Astrocyte of the spinal cord (primary cell): ENCODE measurements at regions of chr3 and their contacts with region 1.

Region 1: GRCh38 chr3:187739561-187740332 is 5.5 kb downstream of the BCL6 start:
- DNase-seq: peak; percentile 97
- H3K4me3 ChIP-seq: peak overlapping the region; percentile 99
- CTCF ChIP-seq: peak; percentile 93

Region 2: DNA sequence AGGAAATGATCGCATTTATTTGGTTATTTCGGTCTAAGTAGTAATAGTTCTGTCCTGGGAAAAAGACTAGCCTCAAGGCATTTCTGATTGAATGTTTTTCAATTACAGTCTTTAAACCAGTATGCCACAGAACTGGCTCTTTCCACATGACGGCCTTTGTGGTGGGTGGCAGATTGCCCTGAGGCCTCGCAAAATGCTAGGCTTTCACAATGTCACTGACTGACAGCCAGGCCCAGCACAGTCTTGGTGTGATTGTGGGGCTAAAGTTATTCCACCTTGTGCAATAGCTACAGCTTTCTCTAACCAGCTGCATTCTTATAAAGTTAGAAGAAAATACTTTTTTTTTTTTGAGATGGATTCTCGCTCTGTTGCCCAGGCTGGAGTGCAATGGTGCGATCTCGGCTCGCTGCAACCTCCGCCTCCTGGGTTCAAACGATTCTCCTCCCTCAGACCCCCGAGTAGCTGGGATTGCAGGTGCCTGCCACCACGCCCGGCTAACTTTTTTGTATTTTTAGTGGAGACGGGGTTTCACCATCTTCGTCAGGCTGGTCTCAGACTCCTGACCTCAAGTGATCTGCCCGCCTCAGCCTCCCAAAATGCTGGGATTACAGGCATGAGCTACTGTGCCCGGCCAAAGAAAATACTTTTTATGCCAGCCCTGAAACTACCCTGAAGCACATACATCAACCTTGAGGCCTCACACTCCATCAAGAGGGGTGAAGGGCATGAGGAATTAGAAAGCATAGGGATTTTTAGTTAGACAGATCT is 899.7 kb before region 1 on chr3:
- in situ Hi-C with region 1: no loop called
- DNase-seq: peak; percentile 40
- H3K4me3 ChIP-seq: no peak overlapping the region
- CTCF ChIP-seq: no peak

Region 3: DNA sequence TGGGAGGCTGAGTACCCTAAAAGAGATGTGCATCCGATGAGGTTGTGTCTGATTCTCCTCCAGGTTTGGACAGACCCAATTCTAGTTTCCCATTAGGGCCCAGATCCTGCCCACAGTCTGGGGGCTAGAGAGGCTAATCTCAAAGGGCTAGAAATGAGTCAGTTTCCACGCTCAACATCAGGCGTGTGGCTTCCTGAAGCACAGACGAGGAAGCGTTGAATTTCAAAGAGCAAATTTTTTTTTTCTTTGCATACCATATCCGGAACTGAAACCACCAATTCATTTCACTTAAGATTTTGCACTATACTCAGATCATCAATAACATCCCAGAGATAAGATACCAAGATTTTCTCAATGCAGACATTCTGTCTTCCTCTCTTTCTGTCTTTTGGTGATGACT is 179.3 kb after region 1 on chr3:
- in situ Hi-C with region 1: no loop called
- DNase-seq: no peak
- H3K4me3 ChIP-seq: no peak overlapping the region
- CTCF ChIP-seq: no peak

Region 4: GRCh38 chr3:188954590-188955208 is 1215.0 kb after region 1 on chr3:
- in situ Hi-C with region 1: loop called (anchors 5 kb)
- DNase-seq: peak; percentile 91
- H3K4me3 ChIP-seq: no peak overlapping the region
- CTCF ChIP-seq: peak; percentile 92